ENCODE measurements at regions of chr19 and their contacts with region 1.

Region 1: GRCh38 chr19:7799640-7800355 is 30.2 kb upstream of the EVI5L start:
- DNase-seq: peak; percentile 66 to 82
- H3K4me3 ChIP-seq: peak overlapping the region; percentile 27
- H3K4me3 Mint-ChIP-seq: peak overlapping the region; percentile 58
- H3K27ac Mint-ChIP-seq: no peak overlapping the region
- H3K4me1 ChIP-seq: no peaks in the 10 kb centered on the region
- H3K4me1 Mint-ChIP-seq: no peaks in the 10 kb centered on the region
- H3K27me3 ChIP-seq: no peaks in the 10 kb centered on the region
- H3K27me3 Mint-ChIP-seq: no peaks in the 10 kb centered on the region
- CTCF ChIP-seq: peak; percentile 49 to 73

Region 2: DNA sequence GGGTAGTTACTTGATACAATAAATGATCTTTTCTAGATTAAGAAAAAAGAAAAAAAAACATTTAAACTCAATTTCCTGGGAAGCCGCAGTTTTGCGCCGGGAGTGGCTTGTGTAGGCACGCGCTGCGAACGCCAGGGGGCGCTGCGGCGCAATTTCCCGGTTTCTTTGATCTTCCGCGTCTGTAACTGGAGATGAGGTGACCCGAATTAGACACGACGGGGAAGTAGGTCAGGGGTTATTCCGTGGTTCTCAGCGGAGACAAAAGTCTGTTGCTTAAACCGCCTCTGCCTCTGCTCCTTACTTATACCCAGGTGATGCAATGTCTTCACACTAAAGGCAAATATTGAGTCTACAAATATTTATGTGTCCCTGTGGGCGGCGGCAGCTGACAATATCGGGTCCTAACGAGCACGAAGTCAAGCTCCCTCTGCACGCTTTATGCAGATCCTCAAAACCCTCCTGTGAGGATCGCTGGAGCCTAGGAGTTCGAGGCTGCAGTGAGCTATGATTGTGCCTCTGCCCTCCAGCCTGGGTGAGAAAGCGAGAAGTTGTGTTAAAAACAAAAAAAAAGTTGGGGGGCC is 147.6 kb before region 1 on chr19:
- CTCF ChIA-PET with region 1: interaction called, 8 read pairs
- POLR2A ChIA-PET with region 1: no interaction called
- intact Hi-C with region 1: loop called (anchors 1 kb)
- DNase-seq: peak; percentile 88 to 92
- H3K4me3 ChIP-seq: peak overlapping the region; percentile 1; the same call in 1 of the 2 replicates
- H3K4me3 Mint-ChIP-seq: peak overlapping the region; percentile 80
- H3K27ac Mint-ChIP-seq: peak overlapping the region; percentile 93
- H3K4me1 ChIP-seq: no peaks in the 10 kb centered on the region
- H3K4me1 Mint-ChIP-seq: peaks cover 13% of the 10 kb centered on the region
- H3K27me3 ChIP-seq: no peaks in the 10 kb centered on the region
- H3K27me3 Mint-ChIP-seq: no peaks in the 10 kb centered on the region
- CTCF ChIP-seq: peak; percentile 90 to 92

Region 3: GRCh38 chr19:7699417-7700401 is 100.1 kb before region 1 on chr19:
- CTCF ChIA-PET with region 1: interaction called, 4 read pairs
- POLR2A ChIA-PET with region 1: interaction called, 18 read pairs
- intact Hi-C with region 1: no loop called
- DNase-seq: no peak
- H3K4me3 ChIP-seq: no peak overlapping the region
- H3K4me3 Mint-ChIP-seq: no peak overlapping the region
- H3K27ac Mint-ChIP-seq: no peak overlapping the region
- H3K4me1 ChIP-seq: no peaks in the 10 kb centered on the region
- H3K4me1 Mint-ChIP-seq: no peaks in the 10 kb centered on the region
- H3K27me3 ChIP-seq: no peaks in the 10 kb centered on the region
- H3K27me3 Mint-ChIP-seq: no peaks in the 10 kb centered on the region
- CTCF ChIP-seq: no peak

Region 4: GRCh38 chr19:7783991-7784421 is 15.8 kb before region 1 on chr19:
- CTCF ChIA-PET with region 1: interaction called, 14 read pairs
- POLR2A ChIA-PET with region 1: no interaction called
- intact Hi-C with region 1: loop called (anchors 1 kb)
- DNase-seq: peak; percentile 89 to 90
- H3K4me3 ChIP-seq: no peak overlapping the region
- H3K4me3 Mint-ChIP-seq: peak overlapping the region; percentile 50
- H3K27ac Mint-ChIP-seq: peak overlapping the region; percentile 79
- H3K4me1 ChIP-seq: peaks cover 13% of the 10 kb centered on the region
- H3K4me1 Mint-ChIP-seq: peaks cover 30% of the 10 kb centered on the region
- H3K27me3 ChIP-seq: no peaks in the 10 kb centered on the region
- H3K27me3 Mint-ChIP-seq: no peaks in the 10 kb centered on the region
- CTCF ChIP-seq: no peak

Region 5: DNA sequence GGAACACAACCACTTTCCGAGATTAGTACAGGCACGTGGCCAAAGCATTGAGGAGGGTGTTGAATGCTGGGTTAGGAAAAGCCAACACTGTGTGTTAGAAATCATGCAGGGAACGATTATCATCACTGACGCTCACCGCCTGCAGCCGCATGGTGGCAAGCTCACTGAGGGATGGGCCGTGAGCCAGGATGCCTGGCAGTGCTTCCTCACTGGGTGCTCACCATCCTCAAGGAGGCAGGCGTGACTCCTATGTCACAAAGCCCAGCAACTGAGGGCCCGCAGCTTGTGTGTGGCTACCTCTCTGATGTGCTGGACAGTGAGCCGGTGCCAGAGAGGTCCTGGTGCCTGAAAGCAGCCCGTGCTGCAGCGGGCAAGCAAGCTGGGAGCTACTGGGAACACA is 174.1 kb after region 1 on chr19:
- CTCF ChIA-PET with region 1: no interaction called
- POLR2A ChIA-PET with region 1: no interaction called
- intact Hi-C with region 1: no loop called
- DNase-seq: no peak
- H3K4me3 ChIP-seq: no peak overlapping the region
- H3K4me3 Mint-ChIP-seq: no peak overlapping the region
- H3K27ac Mint-ChIP-seq: peak overlapping the region; percentile 35
- H3K4me1 ChIP-seq: no peaks in the 10 kb centered on the region
- H3K4me1 Mint-ChIP-seq: no peaks in the 10 kb centered on the region
- H3K27me3 ChIP-seq: no peaks in the 10 kb centered on the region
- H3K27me3 Mint-ChIP-seq: no peaks in the 10 kb centered on the region
- CTCF ChIP-seq: no peak